ENCODE measurements at regions of chr3 and their contacts with region 1.

Region 1: DNA sequence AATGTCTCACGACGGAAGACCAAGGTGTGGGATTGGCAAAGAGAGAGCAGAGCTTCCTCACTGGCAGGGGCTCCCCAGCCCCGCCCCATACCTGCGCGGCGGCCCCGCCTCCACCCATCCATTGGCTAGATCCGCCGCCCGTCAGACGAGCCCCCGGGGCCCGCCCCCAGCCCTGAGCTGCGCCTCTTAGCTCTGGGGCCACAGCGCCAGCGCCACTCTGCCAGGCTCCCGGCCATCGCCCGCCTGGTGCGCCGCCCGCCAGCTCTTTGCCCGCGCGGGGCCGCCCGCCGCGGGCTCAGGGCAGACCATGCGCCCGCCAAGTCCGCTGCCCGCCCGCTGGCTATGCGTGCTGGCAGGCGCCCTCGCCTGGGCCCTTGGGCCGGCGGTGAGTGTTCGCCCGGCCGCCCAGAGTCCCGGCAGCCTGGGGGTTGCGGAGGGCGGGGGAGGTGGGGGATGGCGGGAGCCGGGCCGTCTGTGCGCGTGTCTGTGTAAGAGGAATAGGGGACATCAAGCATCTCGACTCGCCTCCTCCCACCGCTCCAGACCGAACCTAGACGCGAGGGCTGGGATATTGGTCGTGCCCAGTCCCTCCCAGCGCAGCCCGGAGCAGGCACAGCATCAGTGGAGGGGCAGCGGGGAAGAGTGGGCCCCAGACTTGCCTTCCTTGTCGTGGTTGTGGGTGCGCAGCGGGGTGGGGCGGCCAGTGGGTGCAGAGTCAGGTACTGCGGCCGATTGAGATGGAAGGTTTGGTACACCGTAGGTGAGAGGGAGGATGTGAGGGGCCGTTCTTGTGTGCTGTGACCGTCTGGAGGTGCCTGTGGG is at the start of gene VIPR1:
- DNase-seq: peak; percentile 78
- H3K4me3 Mint-ChIP-seq: peak within 1 kb of the TSS; percentile 72
- H3K27ac Mint-ChIP-seq: peak within 1 kb of the TSS; percentile 5
- H3K4me1 Mint-ChIP-seq: peaks cover 10% of the 10 kb centered on the region
- H3K27me3 Mint-ChIP-seq: peaks cover 23% of the 10 kb centered on the region
- CTCF ChIP-seq: no peak
- total RNA-seq, gene VIPR1: 0.28 and 0.54 TPM in 2 replicates

Region 2: DNA sequence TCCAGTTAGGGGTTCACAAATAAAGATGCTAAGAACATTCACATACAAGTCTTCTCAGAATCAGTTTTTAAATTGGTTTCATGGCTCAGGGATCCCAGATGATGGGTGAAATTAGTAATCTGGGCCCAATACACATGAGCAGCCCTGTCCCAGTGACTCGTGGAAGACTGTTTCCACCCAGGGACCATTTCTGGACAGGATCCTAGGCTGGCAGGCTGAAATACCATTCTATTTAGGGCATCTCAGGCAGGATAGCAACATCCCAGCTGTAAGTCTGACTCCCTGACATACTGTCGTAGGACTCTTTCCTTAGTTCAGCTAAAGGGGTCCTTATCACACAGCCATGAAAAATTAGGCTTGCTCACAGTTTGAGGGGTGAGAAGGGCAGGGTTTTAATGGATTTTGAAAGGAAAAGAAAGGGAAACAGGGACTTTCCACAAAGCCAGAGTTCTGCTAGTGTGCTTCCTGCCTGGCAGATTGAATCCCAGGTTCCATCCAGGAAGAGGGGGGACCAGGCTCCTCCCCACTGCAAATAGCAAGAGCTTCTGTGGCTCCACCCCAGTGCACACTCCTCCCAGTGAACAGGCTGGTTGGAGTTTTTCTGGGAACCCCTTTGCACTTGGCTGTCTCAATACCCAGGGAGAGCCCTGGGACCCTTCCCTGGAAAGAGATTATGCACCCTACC is 51.0 kb before region 1 on chr3:
- CTCF ChIA-PET with region 1: no interaction called
- POLR2A ChIA-PET with region 1: no interaction called
- intact Hi-C with region 1: loop called (anchors 1 kb)
- DNase-seq: no peak
- H3K4me3 Mint-ChIP-seq: no peak overlapping the region
- H3K27ac Mint-ChIP-seq: no peak overlapping the region
- H3K4me1 Mint-ChIP-seq: no peaks in the 10 kb centered on the region
- H3K27me3 Mint-ChIP-seq: no peaks in the 10 kb centered on the region
- CTCF ChIP-seq: no peak

Region 3: GRCh38 chr3:42539869-42540714 is 37.5 kb after region 1 on chr3:
- CTCF ChIA-PET with region 1: interaction called, 6 read pairs
- POLR2A ChIA-PET with region 1: no interaction called
- intact Hi-C with region 1: loop called (anchors 1 kb)
- DNase-seq: peak; percentile 70
- H3K4me3 Mint-ChIP-seq: no peak overlapping the region
- H3K27ac Mint-ChIP-seq: no peak overlapping the region
- H3K4me1 Mint-ChIP-seq: no peaks in the 10 kb centered on the region
- H3K27me3 Mint-ChIP-seq: no peaks in the 10 kb centered on the region
- CTCF ChIP-seq: peak; percentile 87

Region 4: DNA sequence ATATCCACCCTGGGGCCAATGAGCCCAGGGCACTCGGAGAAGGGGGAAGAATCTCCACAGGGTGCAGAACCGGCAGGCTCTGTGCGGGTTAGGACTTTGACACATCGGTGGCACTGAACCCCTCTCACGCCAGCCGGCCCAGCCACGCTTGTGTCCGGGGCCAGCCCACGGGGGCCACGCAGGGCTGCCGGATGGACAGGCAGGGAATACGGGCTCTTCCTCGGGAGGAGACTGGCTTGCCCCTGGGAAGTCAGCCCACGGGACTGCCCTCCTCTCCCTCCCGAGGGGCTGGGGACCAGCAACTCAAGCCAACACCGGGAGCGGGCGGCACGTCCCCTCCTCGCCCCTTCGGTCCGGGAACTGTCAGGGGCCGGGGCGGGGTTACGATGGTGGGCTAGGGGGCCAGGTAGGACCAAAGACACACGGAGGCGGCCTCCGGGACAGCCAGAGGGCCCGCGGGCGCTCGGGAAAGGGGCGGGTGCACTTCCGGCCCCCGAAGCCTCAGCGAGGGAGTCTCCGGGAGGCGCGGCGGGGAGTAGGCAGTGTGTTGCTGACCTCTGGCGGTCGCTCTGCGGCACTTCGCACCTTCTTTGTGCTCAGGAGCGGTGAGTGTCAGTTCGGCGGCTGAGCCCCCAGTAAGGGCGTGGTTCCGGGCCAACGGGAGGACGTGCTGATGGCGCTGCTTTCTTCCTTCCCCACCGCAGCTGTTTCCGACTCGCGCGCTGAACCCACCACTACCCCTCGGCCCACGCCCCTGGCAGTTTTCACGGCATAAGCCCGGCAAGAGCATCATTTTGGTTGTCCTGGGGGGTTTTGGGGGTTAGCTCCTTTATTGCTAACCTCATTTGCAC is 378.2 kb after region 1 on chr3:
- CTCF ChIA-PET with region 1: no interaction called
- POLR2A ChIA-PET with region 1: no interaction called
- intact Hi-C with region 1: loop called (anchors 5 kb)
- DNase-seq: peak; percentile 74
- H3K4me3 Mint-ChIP-seq: peak overlapping the region; percentile 63
- H3K27ac Mint-ChIP-seq: peak overlapping the region; percentile 21
- H3K4me1 Mint-ChIP-seq: peaks cover 6% of the 10 kb centered on the region
- H3K27me3 Mint-ChIP-seq: peaks cover 12% of the 10 kb centered on the region
- CTCF ChIP-seq: peak; percentile 88